ENCODE measurements at regions of chr5 and their contacts with region 1.

Region 1: GRCh38 chr5:151239237-151239861 is 13.6 kb upstream of the GM2A start:
- DNase-seq: peak; percentile 82 to 91 (median 86)
- ATAC-seq: peak; percentile 46 to 74 (median 62)
- H3K4me3 ChIP-seq: peak overlapping the region in 10 of 12 donors; percentile 19 to 46 (median 30)
- H3K27ac ChIP-seq: peak overlapping the region; percentile 72 to 90 (median 86)
- H3K4me1 ChIP-seq: peaks cover 3 to 43% (median 23%) of the 10 kb centered on the region in 12 donors
- H3K27me3 ChIP-seq: no peaks in the 10 kb centered on the region
- CTCF ChIP-seq: peak; percentile 67 to 96 (median 94)
- POLR2A ChIP-seq: no peak

Region 2: GRCh38 chr5:151051066-151051930 is 188.1 kb before region 1 on chr5:
- intact Hi-C with region 1: loop called in 4 of 10 experiments (anchors 2 to 10 kb)
- DNase-seq: peak; percentile 82 to 87 (median 84)
- ATAC-seq: peak; percentile 35 to 88 (median 84)
- H3K4me3 ChIP-seq: no peak overlapping the region
- H3K27ac ChIP-seq: peak overlapping the region in 4 of 12 donors; percentile 23 to 50 (median 40)
- H3K4me1 ChIP-seq: peaks cover 0 to 31% (median 7%) of the 10 kb centered on the region in 12 donors
- H3K27me3 ChIP-seq: no peaks in the 10 kb centered on the region
- CTCF ChIP-seq: peak; percentile 77 to 92 (median 88)
- POLR2A ChIP-seq: no peak

Region 3: DNA sequence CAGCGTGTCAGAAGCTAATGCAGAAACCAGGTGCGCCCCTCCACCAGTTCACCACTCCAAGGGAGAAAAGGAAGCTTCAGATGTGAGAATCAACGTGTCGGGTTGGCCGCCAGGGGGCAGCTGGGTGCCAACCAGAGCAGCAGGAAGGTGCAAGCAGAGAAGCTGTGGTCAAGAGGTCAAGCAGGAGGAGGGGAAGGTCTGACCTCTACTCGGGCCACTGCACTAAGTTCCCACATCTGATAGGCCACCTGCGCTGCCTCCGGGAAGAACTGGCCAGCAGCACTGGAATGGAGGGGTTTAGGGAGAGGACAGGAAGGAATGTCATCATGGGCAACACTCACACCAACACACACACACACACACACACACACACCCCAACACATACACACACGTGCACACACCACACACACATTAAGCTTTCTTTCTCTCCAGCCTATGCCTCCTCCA is 113.1 kb before region 1 on chr5:
- intact Hi-C with region 1: loop called (anchors 1 to 5 kb)
- DNase-seq: peak; percentile 73 to 87 (median 78)
- ATAC-seq: peak; percentile 30 to 62 (median 56)
- H3K4me3 ChIP-seq: no peak overlapping the region
- H3K27ac ChIP-seq: peak overlapping the region in 1 of 12 donors; percentile 42
- H3K4me1 ChIP-seq: peaks cover 0 to 29% (median 15%) of the 10 kb centered on the region in 12 donors
- H3K27me3 ChIP-seq: no peaks in the 10 kb centered on the region
- CTCF ChIP-seq: peak; percentile 70 to 86 (median 78)
- POLR2A ChIP-seq: no peak

Region 4: GRCh38 chr5:151164686-151165392 is 74.5 kb before region 1 on chr5:
- intact Hi-C with region 1: loop called in 4 of 10 experiments (anchors 5 kb)
- DNase-seq: peak; percentile 60 to 76 (median 74)
- ATAC-seq: peak; percentile 87 to 92 (median 90)
- H3K4me3 ChIP-seq: no peak overlapping the region
- H3K27ac ChIP-seq: no peak overlapping the region
- H3K4me1 ChIP-seq: peaks cover 0 to 20% (median 9%) of the 10 kb centered on the region in 12 donors
- H3K27me3 ChIP-seq: no peaks in the 10 kb centered on the region
- CTCF ChIP-seq: peak; percentile 85 to 96 (median 93)
- POLR2A ChIP-seq: no peak

Region 5: DNA sequence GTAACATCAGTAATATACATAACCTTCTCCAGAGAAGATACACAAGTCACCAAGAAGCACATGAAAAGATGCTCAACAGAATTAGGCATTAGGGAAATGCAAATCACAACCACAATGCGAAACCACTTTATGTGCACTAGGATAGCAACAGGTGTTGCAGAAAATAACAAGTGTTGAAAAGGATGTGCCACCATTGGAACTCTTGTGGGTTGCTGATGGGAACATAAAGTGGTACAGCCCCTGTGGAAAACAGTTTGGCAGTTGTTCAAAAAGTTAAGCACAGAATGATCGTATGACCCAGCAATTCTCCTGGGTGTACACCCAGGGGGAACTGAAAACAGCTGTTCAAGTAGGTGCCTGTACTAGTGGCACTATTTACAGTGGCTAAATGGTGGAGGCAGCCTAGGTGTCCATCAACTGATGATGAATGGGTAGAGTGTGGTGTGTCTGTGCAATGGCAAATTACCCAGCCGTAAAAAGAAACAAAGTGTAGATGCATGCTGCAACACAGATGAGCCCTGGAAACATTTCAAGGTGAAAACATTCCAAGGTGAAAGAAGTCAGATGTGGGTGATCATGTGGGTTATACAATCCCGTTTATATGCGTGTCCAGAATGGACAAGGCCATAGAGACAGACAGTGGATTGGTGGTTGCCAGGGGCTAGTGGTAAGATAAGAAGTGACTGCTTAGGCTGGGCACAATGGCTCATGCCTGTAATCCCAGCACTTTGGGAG is 42.6 kb before region 1 on chr5:
- intact Hi-C with region 1: loop called in 1 of 10 experiments (anchors 5 kb)
- DNase-seq: peak in 1 of 5 donors; percentile 7
- ATAC-seq: peak; percentile 9 to 71 (median 36)
- H3K4me3 ChIP-seq: no peak overlapping the region
- H3K27ac ChIP-seq: peak overlapping the region in 3 of 12 donors; percentile 7 to 29 (median 13)
- H3K4me1 ChIP-seq: peaks cover 0 to 23% (median 0%) of the 10 kb centered on the region in 12 donors
- H3K27me3 ChIP-seq: no peaks in the 10 kb centered on the region
- CTCF ChIP-seq: no peak
- POLR2A ChIP-seq: no peak

Measured in heart left ventricle (tissue), 16 donors.